Caco-2 (cell line): ENCODE measurements at regions of chr5 and their contacts with region 1.

Region 1: DNA sequence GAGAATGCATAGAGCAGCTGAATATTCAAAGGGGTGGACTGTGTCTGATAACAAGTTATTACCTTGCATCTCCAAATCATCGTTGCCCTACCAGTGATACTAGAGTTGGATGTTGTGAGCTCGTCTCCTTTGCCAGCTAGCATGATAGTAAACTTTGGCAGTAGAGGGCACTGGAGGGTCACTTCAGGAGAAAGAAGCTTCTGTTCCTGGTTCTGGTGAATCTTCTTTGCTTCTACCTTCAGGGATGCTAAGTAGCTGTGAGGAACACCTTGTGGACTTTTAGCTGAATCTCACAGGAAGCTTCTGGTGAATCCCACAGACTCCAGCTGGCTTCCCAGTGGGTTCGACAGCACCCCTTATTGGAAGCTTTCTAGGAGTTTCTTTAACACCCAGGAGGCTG is 626.6 kb upstream of the SGCD start:
- DNase-seq: peak in 1 of 2 experiments; percentile 17
- H3K4me3 ChIP-seq: no peak overlapping the region
- H3K4me3 Mint-ChIP-seq: no peak overlapping the region
- H3K27ac Mint-ChIP-seq: no peak overlapping the region
- H3K4me1 ChIP-seq: no peaks in the 10 kb centered on the region
- H3K4me1 Mint-ChIP-seq: no peaks in the 10 kb centered on the region
- H3K27me3 ChIP-seq: no peaks in the 10 kb centered on the region
- H3K27me3 Mint-ChIP-seq: no peaks in the 10 kb centered on the region
- CTCF ChIP-seq: peak in 1 of 2 experiments; percentile 44

Region 2: DNA sequence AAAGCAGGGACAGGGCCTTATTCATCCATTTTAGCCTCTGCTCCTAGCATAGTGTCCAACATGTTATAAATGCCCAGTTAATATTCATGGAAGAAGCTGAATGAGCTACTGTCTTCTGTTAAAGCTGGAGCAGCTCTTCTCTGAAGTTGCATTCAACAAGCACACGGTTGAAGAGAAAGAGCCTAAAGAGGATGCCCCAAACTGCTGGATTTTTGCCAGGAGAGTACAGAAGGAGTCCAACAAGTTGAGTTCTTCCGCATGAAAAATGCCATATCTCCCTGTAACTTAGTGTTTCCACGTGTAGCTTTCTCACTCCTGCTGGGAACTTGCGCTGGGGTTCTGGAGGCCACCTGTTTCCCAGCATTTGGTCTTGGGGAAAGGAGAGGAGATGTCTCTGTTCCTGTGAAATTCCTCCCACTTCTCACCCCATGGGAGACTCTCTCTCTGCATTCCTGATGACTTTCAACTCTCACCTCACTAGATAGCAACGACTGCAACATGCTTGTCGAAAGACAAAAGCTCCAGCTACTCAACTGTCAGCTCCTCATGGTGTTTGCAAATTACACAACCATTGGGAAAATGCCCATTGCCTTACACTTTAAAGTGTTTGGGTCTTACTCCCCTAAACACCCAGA is 564.0 kb before region 1 on chr5:
- CTCF ChIA-PET with region 1: interaction called, 4 read pairs
- POLR2A ChIA-PET with region 1: no interaction called
- intact Hi-C with region 1: loop called (anchors 2 kb)
- DNase-seq: no peak
- H3K4me3 ChIP-seq: no peak overlapping the region
- H3K4me3 Mint-ChIP-seq: no peak overlapping the region
- H3K27ac Mint-ChIP-seq: no peak overlapping the region
- H3K4me1 ChIP-seq: no peaks in the 10 kb centered on the region
- H3K4me1 Mint-ChIP-seq: no peaks in the 10 kb centered on the region
- H3K27me3 ChIP-seq: no peaks in the 10 kb centered on the region
- H3K27me3 Mint-ChIP-seq: peaks cover 28% of the 10 kb centered on the region
- CTCF ChIP-seq: no peak

Region 3: GRCh38 chr5:155822177-155822576 is 121.8 kb after region 1 on chr5:
- CTCF ChIA-PET with region 1: interaction called, 7 read pairs
- POLR2A ChIA-PET with region 1: no interaction called
- intact Hi-C with region 1: loop called (anchors 1 kb)
- DNase-seq: peak in 1 of 2 experiments; percentile 24
- H3K4me3 ChIP-seq: no peak overlapping the region
- H3K4me3 Mint-ChIP-seq: no peak overlapping the region
- H3K27ac Mint-ChIP-seq: no peak overlapping the region
- H3K4me1 ChIP-seq: no peaks in the 10 kb centered on the region
- H3K4me1 Mint-ChIP-seq: no peaks in the 10 kb centered on the region
- H3K27me3 ChIP-seq: no peaks in the 10 kb centered on the region
- H3K27me3 Mint-ChIP-seq: peaks cover 9% of the 10 kb centered on the region
- CTCF ChIP-seq: peak in 1 of 2 experiments; percentile 23

Region 4: DNA sequence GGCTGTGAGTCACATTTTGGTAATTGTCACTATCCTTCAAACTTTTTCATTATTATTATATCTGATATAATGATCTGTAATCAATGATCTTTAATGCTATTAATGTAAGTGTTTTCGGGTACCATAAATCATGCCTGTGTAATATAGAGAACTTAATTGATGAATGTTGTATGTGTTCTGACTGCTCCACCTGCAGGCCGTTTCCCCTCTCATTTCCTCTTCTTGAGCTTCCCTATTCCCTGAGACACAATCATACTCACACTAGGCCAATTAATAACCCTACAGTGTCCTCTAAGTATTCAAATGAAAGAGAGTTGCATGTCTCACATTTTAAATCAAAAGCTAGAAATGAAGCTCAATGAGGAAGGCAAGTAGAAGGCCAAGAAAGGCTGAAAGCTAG is 205.7 kb after region 1 on chr5:
- CTCF ChIA-PET with region 1: interaction called, 9 read pairs
- POLR2A ChIA-PET with region 1: no interaction called
- intact Hi-C with region 1: loop called (anchors 1 kb)
- DNase-seq: no peak
- H3K4me3 ChIP-seq: no peak overlapping the region
- H3K4me3 Mint-ChIP-seq: no peak overlapping the region
- H3K27ac Mint-ChIP-seq: no peak overlapping the region
- H3K4me1 ChIP-seq: no peaks in the 10 kb centered on the region
- H3K4me1 Mint-ChIP-seq: no peaks in the 10 kb centered on the region
- H3K27me3 ChIP-seq: no peaks in the 10 kb centered on the region
- H3K27me3 Mint-ChIP-seq: no peaks in the 10 kb centered on the region
- CTCF ChIP-seq: peak in 1 of 2 experiments; percentile 23